Head of caudate nucleus (tissue), 42 donors: ENCODE measurements at regions of chr14 and their contacts with region 1.

Region 1: GRCh38 chr14:44961604-44962333 is at the starts of genes KLHL28 and TOGARAM1:
- DNase-seq: peak; percentile 95 to 100 (median 99)

Region 2: DNA sequence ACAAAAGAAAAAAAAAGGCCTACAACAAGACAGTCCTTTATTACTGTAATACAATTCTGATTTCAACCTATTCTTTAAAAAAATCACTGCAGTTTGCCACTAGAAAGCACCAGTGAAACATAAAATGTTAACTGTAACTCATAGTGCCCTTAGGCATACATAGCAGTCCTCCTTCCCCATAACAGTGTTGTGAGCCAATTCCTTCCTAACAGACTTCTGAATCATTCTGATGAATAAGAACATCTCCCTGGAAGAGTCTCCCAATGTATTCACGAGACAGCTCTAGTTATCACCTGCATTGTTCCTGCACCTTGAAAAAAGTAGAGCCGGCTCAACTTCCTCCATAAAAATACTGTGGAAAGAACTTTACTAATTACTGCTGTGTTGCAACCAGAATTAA is 241.1 kb before region 1 on chr14:
- intact Hi-C with region 1: no loop called
- DNase-seq: no peak

Region 3: GRCh38 chr14:44756554-44756953 is 205.2 kb before region 1 on chr14:
- intact Hi-C with region 1: no loop called
- DNase-seq: no peak

Region 4: DNA sequence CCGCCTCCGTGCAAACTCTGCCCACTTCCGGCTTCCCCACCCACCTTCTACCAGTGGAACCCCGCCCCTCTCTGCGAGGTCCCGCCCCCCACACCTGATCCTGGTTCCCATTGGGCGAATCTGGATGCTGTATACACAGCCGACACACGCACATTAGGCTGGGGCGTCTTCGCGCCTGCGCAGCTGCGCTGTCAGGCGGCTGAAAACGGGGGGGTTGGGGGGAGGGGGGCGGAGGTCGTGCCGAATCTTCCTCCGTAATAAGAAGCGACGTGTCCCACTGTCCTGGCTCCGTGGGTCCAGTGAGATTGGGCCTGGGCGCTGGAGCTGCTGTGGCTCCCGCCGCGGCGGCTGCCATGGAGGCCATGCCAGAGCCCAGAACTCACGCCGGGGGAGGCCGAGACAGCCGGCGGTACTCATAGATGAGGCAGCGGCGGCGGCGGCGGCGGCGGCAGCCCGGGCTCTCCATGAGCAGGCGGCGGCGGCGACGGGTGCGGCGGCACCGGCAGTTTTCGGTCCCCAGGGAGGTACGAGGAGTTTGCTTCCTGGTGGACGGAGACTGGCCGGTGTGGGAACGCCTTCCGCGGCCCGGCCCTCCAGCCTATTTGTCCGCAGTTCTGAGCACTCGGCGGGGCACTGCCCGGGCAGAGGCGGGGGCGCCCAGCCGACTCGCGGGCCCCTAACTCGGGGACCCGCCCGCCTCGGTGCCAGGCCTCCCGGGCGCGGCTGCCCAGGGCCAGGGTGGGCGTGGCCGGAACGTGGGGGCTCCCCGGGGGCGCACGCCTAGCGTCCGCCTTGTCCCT is 64.5 kb before region 1 on chr14:
- intact Hi-C with region 1: loop called (anchors 5 kb)
- DNase-seq: peak; percentile 95 to 99 (median 98)

Region 5: GRCh38 chr14:45089813-45090212 is 128.0 kb after region 1 on chr14:
- intact Hi-C with region 1: loop called (anchors 5 kb)
- DNase-seq: peak in 1 of 42 donors; percentile 23

Region 6: GRCh38 chr14:45120096-45120495 is 158.3 kb after region 1 on chr14:
- intact Hi-C with region 1: no loop called
- DNase-seq: no peak